ENCODE measurements at regions of chr15 and their contacts with region 1.

Region 1: GRCh38 chr15:29162411-29162810 is 107.2 kb downstream of the NSMCE3 start:
- DNase-seq: no peak
- H3K4me3 ChIP-seq: no peak overlapping the region
- H3K27ac ChIP-seq: no peak overlapping the region
- H3K27me3 ChIP-seq: no peaks in the 10 kb centered on the region
- CTCF ChIP-seq: no peak

Region 2: DNA sequence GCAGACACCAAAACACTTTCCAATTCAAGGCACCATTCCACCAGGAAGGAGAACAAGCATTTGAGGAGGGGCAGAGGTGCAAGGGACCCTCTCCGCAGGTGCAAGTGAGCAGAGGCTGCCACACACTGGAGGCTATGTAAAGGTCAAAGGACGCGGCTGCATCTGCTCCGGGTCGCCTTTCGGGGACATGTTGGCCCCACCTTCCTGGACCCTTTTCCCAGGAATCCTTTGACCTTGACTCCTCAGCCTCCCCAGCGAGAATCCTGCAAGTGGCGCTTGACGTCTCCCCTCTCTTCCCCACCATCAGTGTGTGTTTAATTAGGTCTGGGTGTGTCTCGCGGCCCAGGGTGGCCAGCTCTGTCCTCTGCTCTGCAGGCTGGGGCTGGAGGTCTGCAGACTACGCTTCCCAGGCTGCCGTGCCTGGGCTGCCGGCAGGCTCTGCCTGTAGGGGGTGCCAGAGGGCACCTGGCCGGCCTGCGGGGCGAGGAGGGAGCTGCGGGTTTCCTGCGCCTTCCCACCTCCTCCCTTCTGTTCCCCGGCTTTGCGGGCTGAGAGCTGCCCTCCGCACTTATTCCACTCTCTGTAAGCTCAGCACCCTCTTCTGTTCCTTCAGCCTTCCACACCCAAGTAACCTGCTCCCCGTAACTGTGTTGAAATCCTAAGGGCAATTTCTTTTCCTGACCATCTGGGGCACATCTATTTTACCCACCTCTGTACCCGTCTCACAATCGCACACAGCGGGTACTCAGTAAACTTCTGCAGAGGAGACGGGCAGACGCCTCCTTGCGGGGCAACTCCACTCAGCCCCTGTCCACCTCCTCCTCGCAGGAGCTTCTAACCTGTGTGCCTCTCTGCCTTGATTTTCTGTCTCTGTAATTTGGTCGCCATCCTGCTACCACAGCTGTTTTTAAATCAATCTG is 22.6 kb before region 1 on chr15:
- CTCF ChIA-PET with region 1: interaction called, 10 read pairs
- POLR2A ChIA-PET with region 1: no interaction called
- DNase-seq: no peak
- H3K4me3 ChIP-seq: no peak overlapping the region
- H3K27ac ChIP-seq: no peak overlapping the region
- H3K27me3 ChIP-seq: peaks cover 3% of the 10 kb centered on the region
- CTCF ChIP-seq: peak; percentile 86

Measured in AG04450 (cell line).